GM12878 (cell line): ENCODE measurements at regions of chr1 and their contacts with region 1.

Region 1: DNA sequence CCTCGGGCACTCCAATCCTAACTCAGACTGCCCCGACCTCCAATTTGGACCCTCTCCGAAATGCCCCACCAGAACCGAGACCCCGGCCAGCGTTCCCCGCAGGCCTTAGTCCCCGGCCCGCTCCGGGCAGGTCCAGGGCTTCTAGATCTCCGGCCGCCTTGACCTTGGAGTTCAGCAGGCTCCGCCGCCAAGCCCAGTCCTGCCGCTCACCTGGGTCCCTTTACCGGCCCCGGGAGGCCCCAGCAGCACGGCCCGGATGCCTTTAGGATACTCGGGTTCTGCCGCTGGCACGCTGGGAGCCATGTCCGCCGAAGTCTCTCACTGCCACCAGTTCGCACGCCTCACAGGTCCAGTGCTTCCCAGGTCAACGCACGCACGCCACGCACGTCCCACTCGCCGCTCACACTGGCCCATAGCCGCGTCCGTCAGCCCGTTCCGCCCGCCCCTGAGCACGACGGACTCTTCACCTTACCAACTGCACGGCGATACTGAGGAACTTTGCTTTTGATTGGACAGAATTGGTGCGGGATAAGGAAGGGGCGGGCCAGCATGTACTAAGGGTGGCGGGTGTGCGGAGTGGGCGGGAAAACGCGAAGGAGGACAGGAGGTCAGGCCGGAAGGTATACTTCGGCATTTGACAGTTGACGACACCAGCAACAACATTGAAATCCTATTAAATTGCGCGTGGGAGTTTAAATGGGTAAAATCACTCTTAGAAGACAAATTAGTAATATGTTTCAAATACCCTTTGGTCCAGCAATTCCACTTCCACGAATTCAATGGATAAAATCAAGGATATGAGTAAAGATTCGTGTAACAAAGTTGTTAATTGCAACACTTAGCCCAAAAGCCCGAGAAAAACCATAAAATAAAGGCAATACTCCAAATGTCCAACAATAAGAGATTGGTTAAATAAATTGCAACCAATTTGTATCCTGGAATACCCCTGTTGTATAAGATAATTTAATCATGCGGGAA is at the start of gene AK2:
- DNase-seq: peak; percentile 98
- ATAC-seq: peak; percentile 99
- H3K4me3 ChIP-seq: peak within 1 kb of the TSS; percentile 88
- H3K27ac ChIP-seq: peak within 1 kb of the TSS; percentile 87
- H3K4me1 ChIP-seq: peaks cover 8% of the 10 kb centered on the region
- H3K27me3 ChIP-seq: no peaks in the 10 kb centered on the region
- CTCF ChIP-seq: no peak
- EP300 ChIP-seq: no peak; a peak in 1 of 4 replicates
- POLR2A ChIP-seq: peak; percentile 92
- RAD21 ChIP-seq: no peak
- polyA plus RNA-seq, gene AK2: 52.3 to 80.3 TPM

Region 2: GRCh38 chr1:32142446-32143301 is 894.1 kb before region 1 on chr1:
- CTCF ChIA-PET with region 1: no interaction called
- POLR2A ChIA-PET with region 1: no interaction called
- RAD21 ChIA-PET with region 1: no interaction called
- SMC1A ChIA-PET with region 1: no interaction called
- in situ Hi-C with region 1: no loop called
- intact Hi-C with region 1: no loop called
- DNase-seq: no peak
- ATAC-seq: no peak; the same call in 2 of the 3 replicates
- H3K4me3 ChIP-seq: no peak overlapping the region
- H3K27ac ChIP-seq: no peak overlapping the region
- H3K4me1 ChIP-seq: peaks cover 6% of the 10 kb centered on the region
- H3K27me3 ChIP-seq: no peaks in the 10 kb centered on the region
- CTCF ChIP-seq: no peak
- EP300 ChIP-seq: no peak
- POLR2A ChIP-seq: no peak
- RAD21 ChIP-seq: no peak

Region 3: DNA sequence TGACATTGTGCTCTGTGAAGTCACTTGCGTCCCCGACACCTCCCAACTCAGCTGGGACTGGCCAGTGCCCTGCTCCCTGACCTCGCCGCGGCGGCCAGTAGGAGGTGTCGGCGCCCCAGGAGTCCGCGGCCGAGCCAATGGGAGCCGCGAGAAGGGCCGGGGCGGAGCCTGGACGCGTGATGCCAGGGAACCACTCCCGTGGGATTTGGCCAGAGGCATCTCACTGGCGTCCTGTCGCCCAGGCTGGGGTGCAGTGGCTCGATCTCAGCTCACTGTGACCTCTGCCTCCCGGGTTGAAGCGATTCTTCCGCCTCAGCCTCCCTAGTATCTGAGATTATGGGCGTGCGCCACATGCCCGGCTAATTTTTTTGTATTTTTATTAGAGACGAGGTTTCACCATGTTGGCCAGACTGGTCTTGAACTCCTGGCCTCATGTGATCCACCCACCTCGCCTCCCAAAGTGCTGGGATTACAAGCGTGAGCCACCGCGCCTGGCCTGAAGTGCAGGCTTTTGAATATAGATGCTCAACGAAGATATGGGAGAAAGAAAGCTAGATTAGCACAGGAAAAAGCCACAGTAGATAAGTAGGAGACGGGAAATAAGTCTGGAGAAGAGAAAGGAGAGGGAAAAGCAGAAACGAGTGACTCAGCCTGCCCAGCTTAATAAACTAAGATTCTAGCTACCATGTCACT is 424.5 kb before region 1 on chr1:
- CTCF ChIA-PET with region 1: no interaction called
- POLR2A ChIA-PET with region 1: no interaction called
- RAD21 ChIA-PET with region 1: no interaction called
- SMC1A ChIA-PET with region 1: no interaction called
- in situ Hi-C with region 1: no loop called
- intact Hi-C with region 1: no loop called
- DNase-seq: no peak
- ATAC-seq: peak; percentile 99
- H3K4me3 ChIP-seq: peak overlapping the region; percentile 67
- H3K27ac ChIP-seq: no peak overlapping the region; the same call in 1 of the 2 replicates
- H3K4me1 ChIP-seq: peaks cover 5% of the 10 kb centered on the region; the same call in 1 of the 2 replicates
- H3K27me3 ChIP-seq: no peaks in the 10 kb centered on the region
- CTCF ChIP-seq: peak; percentile 29 to 43 (median 38); a peak in 4 of 6 replicates
- EP300 ChIP-seq: no peak
- POLR2A ChIP-seq: peak; percentile 58
- RAD21 ChIP-seq: no peak

Region 4: DNA sequence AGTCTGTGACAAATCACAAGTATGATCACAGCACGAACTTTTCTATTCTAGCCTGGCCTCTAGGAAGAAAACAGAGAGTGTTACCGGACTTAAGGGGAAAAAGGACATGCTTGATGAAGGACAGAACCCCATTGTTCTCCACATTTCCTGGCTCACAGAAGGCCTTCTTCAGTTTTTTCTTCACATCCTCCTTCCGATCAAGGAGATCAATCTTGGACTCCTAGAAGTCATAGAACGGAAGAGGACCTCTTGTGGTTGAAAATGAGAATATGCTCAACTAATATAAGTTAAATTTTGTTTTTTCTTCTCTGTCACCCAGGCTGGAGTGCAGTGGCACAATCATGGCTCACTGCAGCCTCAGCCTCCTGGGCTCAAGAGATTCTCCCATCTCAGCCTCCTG is 250.0 kb before region 1 on chr1:
- CTCF ChIA-PET with region 1: no interaction called
- POLR2A ChIA-PET with region 1: no interaction called
- RAD21 ChIA-PET with region 1: no interaction called
- SMC1A ChIA-PET with region 1: no interaction called
- in situ Hi-C with region 1: no loop called
- intact Hi-C with region 1: no loop called
- DNase-seq: no peak
- ATAC-seq: peak; percentile 73
- H3K4me3 ChIP-seq: no peak overlapping the region
- H3K27ac ChIP-seq: no peak overlapping the region
- H3K4me1 ChIP-seq: peaks cover 2% of the 10 kb centered on the region; the same call in 1 of the 2 replicates
- H3K27me3 ChIP-seq: no peaks in the 10 kb centered on the region
- CTCF ChIP-seq: peak in 1 of 3 experiments; percentile 17; a peak in 1 of 6 replicates
- EP300 ChIP-seq: no peak
- POLR2A ChIP-seq: no peak
- RAD21 ChIP-seq: 0 out of 2 replicates have a peak, but pooled peaks have one; percentile 11

Region 5: DNA sequence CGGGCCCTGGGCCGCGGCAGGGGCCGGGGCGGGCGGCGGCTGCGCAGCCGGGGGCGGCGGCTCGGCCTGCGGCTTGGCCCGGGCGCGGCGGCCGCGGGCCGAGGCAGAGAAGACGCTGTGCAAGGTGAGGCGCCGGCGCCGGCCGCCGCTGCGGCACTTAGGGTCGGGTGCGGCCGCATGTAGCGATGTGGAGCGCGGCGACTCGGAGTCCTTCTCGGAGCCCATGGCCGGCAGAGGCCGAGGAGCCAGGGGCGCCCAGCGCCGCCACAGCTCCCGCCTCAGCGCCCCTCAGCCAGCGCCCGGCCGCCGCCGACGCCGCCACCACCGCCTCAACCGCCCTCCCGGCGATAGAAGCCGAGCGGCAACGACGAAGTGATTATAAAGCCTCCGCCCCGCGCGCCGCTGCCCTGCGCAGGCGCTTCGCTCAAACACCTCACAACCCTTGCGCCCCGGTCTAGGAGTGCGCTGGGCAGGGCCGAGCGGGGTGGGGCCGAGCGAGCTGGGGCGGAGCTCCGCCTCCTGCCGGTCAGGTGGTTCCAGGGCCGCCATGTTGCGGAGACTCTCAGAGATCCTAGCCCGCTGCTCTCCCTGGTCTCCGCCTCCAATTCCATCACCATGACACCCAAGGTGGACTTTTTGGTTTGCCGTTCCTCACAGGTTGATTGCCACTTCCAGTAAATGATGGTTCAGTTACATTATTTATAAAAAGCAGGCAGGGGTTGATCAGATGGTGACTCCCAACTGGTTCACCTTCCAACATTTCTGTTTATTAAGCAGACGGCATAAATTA is 72.2 kb before region 1 on chr1 and contains the start of gene RNF19B:
- CTCF ChIA-PET with region 1: interaction called, 3 read pairs
- POLR2A ChIA-PET with region 1: interaction called, 3 read pairs
- RAD21 ChIA-PET with region 1: interaction called, 8 read pairs
- SMC1A ChIA-PET with region 1: interaction called, 14 read pairs
- in situ Hi-C with region 1: no loop called
- intact Hi-C with region 1: loop called (anchors 5 kb)
- DNase-seq: peak; percentile 77
- ATAC-seq: peak; percentile 93
- H3K4me3 ChIP-seq: peak within 1 kb of the TSS; percentile 79
- H3K27ac ChIP-seq: peak within 1 kb of the TSS; percentile 27
- H3K4me1 ChIP-seq: peaks cover 4% of the 10 kb centered on the region; the same call in 1 of the 2 replicates
- H3K27me3 ChIP-seq: no peaks in the 10 kb centered on the region
- CTCF ChIP-seq: no peak
- EP300 ChIP-seq: peak in 1 of 2 experiments; percentile 14; a peak in 1 of 4 replicates
- POLR2A ChIP-seq: peak; percentile 95
- RAD21 ChIP-seq: no peak
- polyA plus RNA-seq, gene RNF19B: 4.3 to 9.1 TPM

Region 6: DNA sequence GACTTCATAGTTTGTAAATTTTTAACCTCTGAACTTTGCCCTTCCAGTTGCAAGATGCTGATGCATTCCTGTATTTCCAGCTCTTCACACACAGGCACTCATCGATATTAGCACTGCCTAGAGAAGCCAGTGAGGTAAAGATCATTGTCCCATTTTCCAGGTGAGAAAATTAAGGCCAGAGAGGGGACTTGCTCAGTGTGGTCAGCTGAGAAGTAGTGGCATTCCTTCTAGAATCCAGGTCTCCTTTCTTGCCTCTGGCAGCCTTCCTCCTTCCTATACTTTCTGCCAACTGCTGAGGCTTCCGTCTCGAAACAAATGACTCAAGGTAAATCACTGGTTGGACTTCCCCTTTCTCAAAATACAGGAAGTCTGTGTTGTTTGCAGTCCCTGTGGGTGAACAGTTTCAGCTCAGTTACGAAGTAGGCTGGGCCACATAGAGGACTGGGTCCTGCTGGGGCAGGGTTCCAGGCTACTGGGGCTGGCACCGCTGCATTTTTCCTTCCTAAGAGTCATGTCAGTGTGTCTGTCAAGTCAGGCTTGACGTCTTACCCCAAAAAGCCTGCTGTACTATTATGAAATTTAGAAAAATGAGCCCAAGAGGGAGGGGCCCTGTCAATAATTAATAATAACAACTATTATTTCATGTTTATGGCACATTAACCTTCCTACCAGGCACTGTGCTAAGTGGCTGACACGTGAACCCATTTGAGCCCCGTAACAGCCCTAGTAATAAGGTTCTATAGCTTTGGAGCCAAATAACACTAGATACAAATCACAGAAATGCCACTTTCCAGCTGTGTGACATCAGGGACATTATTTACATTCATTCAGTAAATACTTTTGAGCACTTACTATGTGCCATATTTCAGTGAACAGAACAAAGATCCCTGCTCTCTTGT is 55.6 kb before region 1 on chr1:
- CTCF ChIA-PET with region 1: interaction called, 5 read pairs
- POLR2A ChIA-PET with region 1: no interaction called
- RAD21 ChIA-PET with region 1: interaction called, 3 read pairs
- SMC1A ChIA-PET with region 1: interaction called, 5 read pairs
- in situ Hi-C with region 1: no loop called
- intact Hi-C with region 1: loop called (anchors 2 kb)
- DNase-seq: peak; percentile 92
- ATAC-seq: peak; percentile 95
- H3K4me3 ChIP-seq: peak overlapping the region; percentile 54; the same call in 1 of the 2 replicates
- H3K27ac ChIP-seq: peak overlapping the region; percentile 98
- H3K4me1 ChIP-seq: peaks cover 52% of the 10 kb centered on the region
- H3K27me3 ChIP-seq: no peaks in the 10 kb centered on the region
- CTCF ChIP-seq: no peak
- EP300 ChIP-seq: peak; percentile 41 to 68; a peak in 2 of 4 replicates
- POLR2A ChIP-seq: peak; percentile 91
- RAD21 ChIP-seq: no peak

Region 7: GRCh38 chr1:33022650-33023200 is 14.1 kb before region 1 on chr1:
- CTCF ChIA-PET with region 1: interaction called, 5 read pairs
- POLR2A ChIA-PET with region 1: interaction called, 12 read pairs
- RAD21 ChIA-PET with region 1: interaction called, 7 read pairs
- SMC1A ChIA-PET with region 1: interaction called, 9 read pairs
- in situ Hi-C with region 1: no loop called
- intact Hi-C with region 1: no loop called
- DNase-seq: no peak
- ATAC-seq: no peak
- H3K4me3 ChIP-seq: no peak overlapping the region
- H3K27ac ChIP-seq: no peak overlapping the region
- H3K4me1 ChIP-seq: peaks cover 18% of the 10 kb centered on the region
- H3K27me3 ChIP-seq: no peaks in the 10 kb centered on the region
- CTCF ChIP-seq: no peak
- EP300 ChIP-seq: no peak
- POLR2A ChIP-seq: no peak
- RAD21 ChIP-seq: no peak

Region 8: DNA sequence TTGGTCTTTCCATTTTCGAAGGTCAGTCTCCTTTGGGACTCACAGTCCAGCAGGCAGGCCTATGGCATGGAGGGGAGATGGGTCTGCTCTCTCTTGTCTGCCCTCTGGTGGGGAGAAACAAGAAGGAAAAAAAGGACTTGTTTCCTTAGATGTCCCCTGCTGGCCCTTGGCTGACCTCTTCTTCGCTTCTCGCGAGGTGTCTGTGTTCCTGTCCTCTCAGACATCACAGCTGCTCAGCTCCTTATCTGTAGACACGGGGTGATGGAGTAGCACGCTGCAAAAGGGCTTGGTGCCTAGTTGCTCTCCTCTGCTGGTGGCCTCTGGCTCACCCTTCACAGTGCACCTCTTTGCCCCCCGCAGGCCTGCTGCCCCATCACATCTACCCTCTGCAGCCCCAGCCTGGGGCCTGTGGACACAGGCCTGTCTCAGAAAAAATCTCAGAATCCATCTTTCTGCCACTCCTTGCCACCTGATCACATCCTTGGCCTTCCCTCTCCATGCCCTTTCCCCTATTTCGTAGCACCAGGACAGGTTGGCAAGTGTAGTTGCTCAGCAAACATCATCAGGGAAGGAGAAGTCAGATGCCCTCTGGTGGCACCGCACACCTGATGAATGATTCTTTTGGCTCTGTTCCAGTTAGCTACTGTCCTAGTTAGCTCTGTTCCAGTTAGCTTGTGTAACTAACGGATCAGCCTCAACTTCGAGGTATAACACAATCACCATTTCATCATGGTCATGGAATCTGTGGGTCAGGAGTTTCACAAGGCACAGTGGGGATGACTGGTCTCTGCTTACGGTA is 18.6 kb after region 1 on chr1:
- CTCF ChIA-PET with region 1: interaction called, 10 read pairs
- POLR2A ChIA-PET with region 1: no interaction called
- RAD21 ChIA-PET with region 1: no interaction called
- SMC1A ChIA-PET with region 1: interaction called, 3 read pairs
- in situ Hi-C with region 1: no loop called
- intact Hi-C with region 1: no loop called
- DNase-seq: peak; percentile 15
- ATAC-seq: peak; percentile 91
- H3K4me3 ChIP-seq: no peak overlapping the region
- H3K27ac ChIP-seq: no peak overlapping the region
- H3K4me1 ChIP-seq: peaks cover 9% of the 10 kb centered on the region
- H3K27me3 ChIP-seq: no peaks in the 10 kb centered on the region
- CTCF ChIP-seq: peak; percentile 67 to 74 (median 74)
- EP300 ChIP-seq: no peak
- POLR2A ChIP-seq: no peak
- RAD21 ChIP-seq: peak; percentile 64

Region 9: DNA sequence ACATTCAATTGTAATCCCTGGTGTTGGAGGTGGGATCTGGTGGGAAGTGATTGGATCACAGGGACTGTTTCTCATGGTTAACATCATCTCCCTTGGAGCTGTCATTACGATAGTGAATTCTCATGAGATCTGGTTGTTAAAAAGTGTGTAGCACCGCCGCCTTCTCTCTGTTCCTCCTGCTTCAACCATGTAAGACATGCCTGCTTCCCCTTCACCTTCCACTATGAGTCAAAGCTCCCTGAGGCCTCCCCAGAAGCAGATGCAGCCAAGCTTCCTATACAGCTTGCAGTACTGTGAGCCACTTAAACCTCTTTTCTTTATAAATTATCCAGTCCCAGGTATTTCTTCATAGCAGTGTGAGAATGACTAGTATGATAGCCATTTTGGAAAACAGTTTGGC is 175.2 kb after region 1 on chr1:
- CTCF ChIA-PET with region 1: no interaction called
- POLR2A ChIA-PET with region 1: no interaction called
- RAD21 ChIA-PET with region 1: no interaction called
- SMC1A ChIA-PET with region 1: no interaction called
- in situ Hi-C with region 1: no loop called
- intact Hi-C with region 1: no loop called
- DNase-seq: no peak
- ATAC-seq: no peak
- H3K4me3 ChIP-seq: no peak overlapping the region
- H3K27ac ChIP-seq: no peak overlapping the region
- H3K4me1 ChIP-seq: no peaks in the 10 kb centered on the region
- H3K27me3 ChIP-seq: no peaks in the 10 kb centered on the region
- CTCF ChIP-seq: no peak
- EP300 ChIP-seq: no peak
- POLR2A ChIP-seq: no peak
- RAD21 ChIP-seq: no peak